Heart right ventricle (tissue), 16 donors: ENCODE measurements at regions of chr4 and their contacts with region 1.

Region 1: DNA sequence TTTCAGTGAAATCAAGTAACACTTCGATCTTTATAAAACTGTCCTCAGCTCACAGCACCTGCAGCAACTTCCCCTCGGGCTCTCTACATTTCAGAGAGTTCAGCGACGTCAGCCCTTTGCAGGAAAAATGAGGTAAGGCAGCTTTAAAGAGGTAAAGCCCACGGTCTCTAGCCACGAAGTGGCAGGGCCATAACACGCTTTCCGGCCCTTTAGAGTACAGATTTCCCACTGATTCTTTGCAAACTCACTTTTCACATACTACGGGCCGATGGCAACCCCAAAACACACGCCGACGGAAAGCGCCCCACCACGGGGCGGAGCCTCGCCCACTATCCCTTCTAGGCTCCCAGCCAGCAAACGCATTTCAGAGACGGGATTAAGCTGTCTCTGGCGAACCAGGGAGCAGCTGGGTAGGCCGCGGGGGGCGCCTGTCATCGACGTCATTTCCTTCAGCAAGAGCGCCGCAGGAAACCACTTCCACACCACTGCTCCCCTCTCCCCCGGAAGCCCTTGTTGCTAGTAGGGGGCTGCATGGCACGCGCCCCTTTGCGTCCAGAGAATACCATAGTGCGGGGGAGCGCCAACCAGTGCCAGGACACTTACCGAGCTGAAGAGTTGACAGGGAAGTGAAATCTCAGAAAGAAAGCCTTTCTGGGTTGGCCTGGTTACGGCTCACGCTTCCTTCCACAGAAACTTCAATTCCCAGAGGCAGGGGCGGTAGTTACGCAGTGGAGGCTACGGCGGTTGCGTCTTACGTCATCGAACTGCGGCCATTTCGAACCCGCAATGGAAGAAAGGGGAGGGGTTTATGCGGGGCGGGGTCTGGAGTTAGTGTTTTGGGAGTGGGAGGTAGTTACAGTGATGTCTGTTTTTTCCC is at the start of gene TRMT10A:
- DNase-seq: peak; percentile 96 to 98
- ATAC-seq: peak; percentile 97 to 99 (median 99)
- H3K4me3 ChIP-seq: peak within 1 kb of the TSS; percentile 32 to 70 (median 64)
- H3K27ac ChIP-seq: peak within 1 kb of the TSS; percentile 86 to 97 (median 94)
- H3K4me1 ChIP-seq: peaks cover 0 to 15% (median 6%) of the 10 kb centered on the region in 9 donors
- H3K27me3 ChIP-seq: peaks cover 0 to 14% (median 0%) of the 10 kb centered on the region in 7 donors
- CTCF ChIP-seq: peak in 3 of 9 donors; percentile 13 to 25 (median 17)
- total RNA-seq, gene TRMT10A: 2.8 to 5.0 (median 3.9) TPM

Region 2: GRCh38 chr4:98771959-98772632 is 791.5 kb before region 1 on chr4:
- intact Hi-C with region 1: no loop called
- DNase-seq: no peak
- ATAC-seq: no peak
- H3K4me3 ChIP-seq: no peak overlapping the region
- H3K27ac ChIP-seq: no peak overlapping the region
- H3K4me1 ChIP-seq: no peaks in the 10 kb centered on the region
- H3K27me3 ChIP-seq: no peaks in the 10 kb centered on the region
- CTCF ChIP-seq: no peak

Region 3: DNA sequence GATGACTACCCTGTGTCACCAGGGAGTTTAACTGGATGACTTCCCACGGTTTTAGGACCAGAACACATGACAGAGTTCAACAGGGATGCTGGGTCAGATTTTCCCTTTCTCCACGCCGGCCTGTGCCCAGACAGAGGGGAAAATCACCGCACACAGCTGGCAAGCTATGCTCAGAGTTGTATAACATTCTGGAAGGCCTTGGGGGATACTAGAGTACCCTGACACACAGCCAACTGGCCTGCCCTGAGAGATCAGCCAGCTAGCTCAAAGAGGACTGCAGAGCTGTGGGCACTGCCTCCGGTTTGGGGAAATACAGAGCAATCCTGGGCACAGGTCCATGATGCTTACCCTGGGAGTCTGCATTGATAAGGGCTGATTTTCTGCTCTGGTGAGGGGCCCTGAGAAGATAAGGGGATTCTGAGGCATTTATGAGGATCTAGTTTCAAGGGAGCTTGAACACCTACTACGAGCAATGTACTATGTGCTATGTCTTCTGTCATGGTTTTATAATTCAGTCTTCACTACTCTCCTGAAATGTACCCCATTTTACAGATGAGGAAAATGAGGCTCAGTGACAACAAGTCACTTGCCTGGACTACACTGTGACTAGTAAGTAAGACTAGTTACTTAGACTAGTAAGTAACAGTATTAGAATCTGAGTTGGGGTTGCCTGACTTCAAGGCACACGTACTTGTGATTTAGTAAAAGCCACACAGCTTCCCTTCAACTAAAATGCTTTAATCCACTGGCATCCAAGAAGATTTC is 79.4 kb after region 1 on chr4:
- intact Hi-C with region 1: loop called in 1 of 10 experiments (anchors 10 kb)
- DNase-seq: peak; percentile 68 to 79
- ATAC-seq: peak; percentile 91 to 99 (median 96)
- H3K4me3 ChIP-seq: no peak overlapping the region
- H3K27ac ChIP-seq: peak overlapping the region in 7 of 10 donors; percentile 7 to 72 (median 56)
- H3K4me1 ChIP-seq: peaks cover 0 to 29% (median 13%) of the 10 kb centered on the region in 9 donors
- H3K27me3 ChIP-seq: no peaks in the 10 kb centered on the region
- CTCF ChIP-seq: no peak

Region 4: GRCh38 chr4:99723612-99724011 is 160.1 kb after region 1 on chr4:
- intact Hi-C with region 1: loop called in 5 of 10 experiments (anchors 5 to 10 kb)
- DNase-seq: peak; percentile 55 to 58
- ATAC-seq: peak; percentile 81 to 98 (median 95)
- H3K4me3 ChIP-seq: no peak overlapping the region
- H3K27ac ChIP-seq: peak overlapping the region; percentile 5 to 83 (median 63)
- H3K4me1 ChIP-seq: peaks cover 0 to 35% (median 11%) of the 10 kb centered on the region in 9 donors
- H3K27me3 ChIP-seq: no peaks in the 10 kb centered on the region
- CTCF ChIP-seq: no peak

Region 5: GRCh38 chr4:99808260-99808857 is 244.8 kb after region 1 on chr4:
- intact Hi-C with region 1: loop called in 9 of 10 experiments (anchors 1 to 5 kb)
- DNase-seq: peak; percentile 40 to 47
- ATAC-seq: peak in 7 of 8 donors; percentile 42 to 86 (median 78)
- H3K4me3 ChIP-seq: no peak overlapping the region
- H3K27ac ChIP-seq: no peak overlapping the region
- H3K4me1 ChIP-seq: peaks cover 0 to 8% (median 0%) of the 10 kb centered on the region in 9 donors
- H3K27me3 ChIP-seq: peaks cover 0 to 3% (median 0%) of the 10 kb centered on the region in 7 donors
- CTCF ChIP-seq: peak; percentile 39 to 74 (median 69)

Region 6: DNA sequence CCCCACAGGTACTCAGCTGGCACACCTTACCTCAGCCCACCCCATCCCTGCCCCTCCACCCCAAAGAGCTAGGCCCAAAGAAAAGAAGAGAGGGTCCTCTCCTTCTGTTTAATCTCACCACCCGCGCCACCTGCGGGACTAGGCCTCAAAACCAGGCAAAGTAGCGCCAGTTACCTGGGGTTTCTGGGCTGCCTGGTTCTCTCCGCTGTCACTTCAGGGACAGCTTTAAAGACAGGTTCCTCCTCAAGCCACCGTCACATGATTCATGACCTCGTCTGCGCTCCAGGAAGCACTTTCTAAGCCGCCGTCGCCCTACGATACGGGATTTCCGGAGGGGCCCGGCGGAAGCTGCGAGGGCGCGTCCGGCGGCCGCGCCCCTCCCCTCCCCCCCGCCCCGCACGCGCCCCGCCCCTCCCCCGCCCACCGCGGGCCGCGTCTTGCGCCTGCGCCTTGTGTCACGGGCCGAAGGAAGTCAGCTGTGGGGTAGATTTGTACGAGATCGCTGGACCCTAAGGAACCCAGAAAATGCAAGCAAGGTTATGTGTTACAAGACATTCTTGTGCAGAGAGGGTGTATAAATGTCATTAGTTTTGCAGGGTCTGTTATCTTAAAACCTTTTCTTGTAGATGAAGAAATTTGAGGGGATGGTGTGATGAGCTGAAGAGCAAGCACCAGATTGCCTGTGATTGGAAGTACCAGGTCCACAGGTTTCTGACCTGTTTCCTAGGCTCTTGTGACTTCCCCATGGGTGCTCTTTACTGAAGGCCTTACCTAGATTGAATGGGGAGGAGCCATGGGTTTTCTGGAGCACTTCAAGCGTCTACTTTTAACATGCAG is 330.8 kb after region 1 on chr4 and contains the start of gene LAMTOR3:
- intact Hi-C with region 1: loop called in 8 of 10 experiments (anchors 5 to 10 kb)
- DNase-seq: peak; percentile 89 to 92
- ATAC-seq: peak; percentile 98 to 100 (median 99)
- H3K4me3 ChIP-seq: peak within 1 kb of the TSS; percentile 65 to 94 (median 86)
- H3K27ac ChIP-seq: peak within 1 kb of the TSS; percentile 50 to 93 (median 82)
- H3K4me1 ChIP-seq: peaks cover 5 to 49% (median 34%) of the 10 kb centered on the region in 9 donors
- H3K27me3 ChIP-seq: no peaks in the 10 kb centered on the region
- CTCF ChIP-seq: no peak
- total RNA-seq, gene LAMTOR3: 31.2 to 37.4 (median 35.5) TPM